ENCODE measurements at regions of chr17 and their contacts with region 1.

Region 1: GRCh38 chr17:47987240-47987835 is 16.4 kb downstream of the CDK5RAP3 start:
- DNase-seq: peak in 2 of 4 donors; percentile 53 to 58
- ATAC-seq: peak; percentile 61
- H3K4me3 ChIP-seq: no peak overlapping the region
- H3K27ac ChIP-seq: peak overlapping the region; percentile 15 to 48 (median 36)
- H3K4me1 ChIP-seq: peaks cover 5% of the 10 kb centered on the region
- H3K27me3 ChIP-seq: no peaks in the 10 kb centered on the region
- CTCF ChIP-seq: no peak
- POLR2A ChIP-seq: no peak

Region 2: DNA sequence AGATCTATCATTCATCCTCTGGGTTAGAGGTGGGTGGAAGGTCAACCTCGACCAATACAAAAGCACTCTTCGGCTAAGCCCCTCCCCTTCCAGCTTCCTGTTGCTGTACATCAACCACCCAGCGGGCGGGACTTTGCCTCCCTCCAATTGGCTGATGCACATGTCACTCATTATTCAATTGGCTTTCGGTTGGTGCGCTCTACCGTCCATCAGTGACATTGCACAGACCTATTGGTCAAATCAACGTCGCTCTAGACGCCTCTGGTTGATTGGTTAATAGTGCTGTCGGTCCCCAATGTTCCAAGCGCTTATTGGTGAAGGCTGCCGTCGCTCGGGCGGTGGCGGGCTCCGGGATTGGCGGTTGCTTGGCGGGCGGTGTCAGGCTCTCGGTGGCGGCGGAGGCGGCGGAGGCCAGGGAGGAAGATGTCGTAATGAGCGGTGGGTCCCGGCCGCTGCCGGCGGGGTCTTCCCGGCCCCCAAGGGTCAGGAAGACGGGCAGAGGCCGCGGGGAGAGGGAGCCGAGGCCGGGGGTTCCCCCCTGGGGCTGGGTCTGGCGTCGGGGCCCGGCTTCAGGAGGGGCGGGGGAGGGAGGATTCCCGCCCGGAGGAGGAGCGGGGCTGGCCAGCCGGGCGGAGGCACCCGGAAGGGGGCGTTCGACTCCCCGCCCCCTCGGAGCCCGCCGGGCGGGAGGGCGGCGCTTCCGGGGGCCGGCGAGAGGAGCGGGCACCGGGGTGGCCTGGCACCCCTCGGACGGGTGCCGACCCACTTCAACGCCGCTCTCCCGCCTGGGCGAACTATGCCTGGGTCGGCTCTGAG is 91.3 kb before region 1 on chr17 and contains the start of gene SP2:
- intact Hi-C with region 1: loop called (anchors 10 kb)
- DNase-seq: peak; percentile 100
- ATAC-seq: peak; percentile 94
- H3K4me3 ChIP-seq: peak within 1 kb of the TSS; percentile 42 to 58
- H3K27ac ChIP-seq: peak within 1 kb of the TSS; percentile 97 to 100 (median 98)
- H3K4me1 ChIP-seq: peaks cover 17% of the 10 kb centered on the region
- H3K27me3 ChIP-seq: no peaks in the 10 kb centered on the region
- CTCF ChIP-seq: peak in 3 of 7 experiments; percentile 6 to 21 (median 12)
- POLR2A ChIP-seq: peak; percentile 59 to 81 (median 68)
- total RNA-seq, gene SP2: 4.7 to 6.3 TPM

Region 3: GRCh38 chr17:48047741-48048383 is 60.5 kb after region 1 on chr17 and contains the start of gene NFE2L1:
- intact Hi-C with region 1: no loop called
- DNase-seq: peak; percentile 99 to 100 (median 99)
- ATAC-seq: peak; percentile 97
- H3K4me3 ChIP-seq: peak within 1 kb of the TSS; percentile 59 to 62
- H3K27ac ChIP-seq: peak within 1 kb of the TSS; percentile 90 to 95 (median 92)
- H3K4me1 ChIP-seq: peaks cover 63% of the 10 kb centered on the region
- H3K27me3 ChIP-seq: no peaks in the 10 kb centered on the region
- CTCF ChIP-seq: peak in 1 of 7 experiments; percentile 23
- POLR2A ChIP-seq: peak; percentile 67 to 95 (median 92)
- total RNA-seq, gene NFE2L1: 39.4 to 74.2 TPM

Measured in body of pancreas (tissue), 4 donors.